ENCODE measurements at regions of chr17 and their contacts with region 1.

Region 1: DNA sequence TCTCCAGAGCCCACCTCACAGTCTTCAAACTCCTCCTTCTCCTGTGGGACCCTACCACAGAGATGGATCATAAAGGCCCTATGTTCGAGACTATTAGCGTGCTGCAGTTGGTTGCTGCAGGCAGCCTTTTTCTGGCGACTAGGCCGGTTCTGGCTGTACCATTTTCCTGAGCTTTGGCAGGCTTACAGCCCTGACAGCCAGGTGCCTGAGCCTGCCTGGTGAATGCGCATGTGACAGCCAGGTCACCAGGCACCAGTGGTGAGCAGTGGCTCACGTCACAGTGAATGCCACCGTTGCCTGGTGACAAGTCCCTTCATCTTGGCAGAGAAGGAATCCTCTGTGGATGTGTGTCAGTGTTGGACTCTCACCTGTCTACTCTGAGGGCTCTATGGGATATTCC is 978.8 kb downstream of the KCNJ18 start:
- DNase-seq: no peak
- ATAC-seq: no peak
- H3K4me3 Mint-ChIP-seq: no peak overlapping the region
- H3K27ac Mint-ChIP-seq: no peak overlapping the region
- H3K4me1 Mint-ChIP-seq: no peaks in the 10 kb centered on the region
- H3K27me3 Mint-ChIP-seq: no peaks in the 10 kb centered on the region

Region 2: DNA sequence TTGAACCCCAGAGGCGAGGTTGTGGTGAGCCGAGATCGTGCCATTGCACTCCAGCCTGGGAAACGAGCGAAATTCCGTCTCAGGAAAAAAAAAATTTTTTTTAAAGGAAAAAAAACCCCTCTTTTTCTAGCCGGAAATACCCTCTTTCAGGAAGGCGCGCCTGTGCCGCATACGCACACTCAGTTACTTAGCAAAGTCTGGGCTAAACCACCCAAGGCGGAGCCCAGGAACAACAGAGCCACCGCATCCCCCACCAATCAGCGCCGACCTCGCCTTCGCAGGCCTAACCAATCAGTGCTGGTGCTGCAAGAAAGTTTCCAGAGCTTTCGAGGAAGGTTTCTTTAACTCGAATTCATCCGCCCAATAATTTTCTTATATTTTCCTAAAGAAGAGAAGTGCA is 468.4 kb before region 1 on chr17:
- CTCF ChIA-PET with region 1: no interaction called
- POLR2A ChIA-PET with region 1: no interaction called
- intact Hi-C with region 1: loop called in 1 of 2 experiments (anchors 5 kb)
- DNase-seq: no peak
- ATAC-seq: no peak
- H3K4me3 Mint-ChIP-seq: no peak overlapping the region
- H3K27ac Mint-ChIP-seq: no peak overlapping the region
- H3K4me1 Mint-ChIP-seq: no peaks in the 10 kb centered on the region
- H3K27me3 Mint-ChIP-seq: no peaks in the 10 kb centered on the region

Measured in activated CD4-positive, alpha-beta T cell treated with anti-CD3 and anti-CD28 coated beads for 36 hours (primary cell).